ENCODE measurements at regions of chr10 and their contacts with region 1.

Region 1: GRCh38 chr10:63157845-63158624 is 24.9 kb downstream of the NRBF2 start:
- DNase-seq: peak in 1 of 3 donors; percentile 53
- ATAC-seq: peak; percentile 91 to 95 (median 94)
- H3K4me3 ChIP-seq: no peak overlapping the region
- H3K27ac ChIP-seq: no peak overlapping the region
- H3K4me1 ChIP-seq: no peaks in the 10 kb centered on the region
- H3K27me3 ChIP-seq: no peaks in the 10 kb centered on the region
- CTCF ChIP-seq: peak; percentile 77 to 88 (median 82)
- POLR2A ChIP-seq: no peak

Region 2: DNA sequence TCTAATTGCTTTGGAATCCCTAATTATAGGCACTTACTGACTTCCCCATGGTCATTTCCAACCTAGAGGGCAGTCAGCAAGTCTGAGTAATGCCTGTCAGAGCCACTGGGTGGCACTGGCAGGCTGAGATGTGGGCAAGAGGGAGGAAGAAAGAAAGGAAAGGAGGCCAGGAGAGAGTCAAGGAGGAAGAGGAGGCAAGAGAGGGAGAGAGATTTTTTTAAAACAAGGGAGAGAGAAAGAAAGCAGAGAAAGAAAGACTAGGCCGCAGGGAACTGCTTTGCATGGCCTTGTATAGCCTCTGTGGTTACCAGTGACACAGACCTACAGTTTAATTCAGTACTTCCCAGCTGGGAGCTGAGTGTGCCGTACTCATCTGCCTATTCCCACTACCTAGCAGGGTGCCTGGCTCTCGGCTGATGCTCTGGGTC is 563.9 kb before region 1 on chr10:
- intact Hi-C with region 1: loop called in 1 of 2 experiments (anchors 10 kb)
- DNase-seq: peak; percentile 54 to 68 (median 66)
- ATAC-seq: peak; percentile 94 to 98 (median 94)
- H3K4me3 ChIP-seq: no peak overlapping the region
- H3K27ac ChIP-seq: no peak overlapping the region
- H3K4me1 ChIP-seq: no peaks in the 10 kb centered on the region
- H3K27me3 ChIP-seq: no peaks in the 10 kb centered on the region
- CTCF ChIP-seq: peak; percentile 83 to 92 (median 86)
- POLR2A ChIP-seq: no peak

Region 3: DNA sequence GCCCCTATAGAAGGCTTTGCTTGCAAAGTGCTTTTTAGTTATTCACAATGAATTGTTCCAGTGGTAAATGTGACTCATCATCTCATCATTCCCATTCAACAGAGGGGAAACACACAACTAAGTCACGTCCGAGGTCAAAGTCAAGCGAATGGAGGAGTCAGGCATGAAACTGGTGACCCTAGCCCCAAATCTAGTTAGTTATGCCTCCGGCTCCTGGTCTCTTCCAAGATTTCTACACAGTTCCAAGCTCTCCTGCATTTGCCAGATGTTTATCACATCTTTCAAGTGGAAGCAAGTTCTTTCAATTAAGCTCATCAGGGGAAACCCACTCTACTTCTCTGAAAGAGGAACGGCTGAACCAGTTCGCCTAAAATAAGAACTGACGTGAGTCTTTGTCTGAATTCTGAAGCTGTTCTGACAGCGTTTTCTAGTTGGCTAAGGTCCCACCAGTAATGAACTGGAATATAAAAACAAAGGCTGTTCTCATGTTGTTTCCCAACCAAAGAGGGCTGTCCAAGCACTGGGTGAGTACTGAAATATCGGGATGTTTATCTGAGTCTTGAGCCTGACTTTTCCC is 165.8 kb before region 1 on chr10:
- intact Hi-C with region 1: loop called in 1 of 2 experiments (anchors 10 kb)
- DNase-seq: no peak
- ATAC-seq: no peak
- H3K4me3 ChIP-seq: no peak overlapping the region
- H3K27ac ChIP-seq: no peak overlapping the region
- H3K4me1 ChIP-seq: no peaks in the 10 kb centered on the region
- H3K27me3 ChIP-seq: no peaks in the 10 kb centered on the region
- CTCF ChIP-seq: no peak
- POLR2A ChIP-seq: no peak

Measured in right lobe of liver (tissue), 6 donors.